ENCODE measurements at regions of chr10 and their contacts with region 1.

Region 1: GRCh38 chr10:103069453-103070331 is 123.4 kb downstream of the NT5C2 start:
- DNase-seq: peak; percentile 33 to 83
- H3K4me3 ChIP-seq: no peak overlapping the region
- H3K27ac ChIP-seq: no peak overlapping the region
- H3K4me1 ChIP-seq: no peaks in the 10 kb centered on the region
- H3K27me3 ChIP-seq: no peaks in the 10 kb centered on the region
- CTCF ChIP-seq: peak; percentile 69 to 85 (median 73)
- EP300 ChIP-seq: no peak
- POLR2A ChIP-seq: no peak
- RAD21 ChIP-seq: peak; percentile 95 to 96

Region 2: DNA sequence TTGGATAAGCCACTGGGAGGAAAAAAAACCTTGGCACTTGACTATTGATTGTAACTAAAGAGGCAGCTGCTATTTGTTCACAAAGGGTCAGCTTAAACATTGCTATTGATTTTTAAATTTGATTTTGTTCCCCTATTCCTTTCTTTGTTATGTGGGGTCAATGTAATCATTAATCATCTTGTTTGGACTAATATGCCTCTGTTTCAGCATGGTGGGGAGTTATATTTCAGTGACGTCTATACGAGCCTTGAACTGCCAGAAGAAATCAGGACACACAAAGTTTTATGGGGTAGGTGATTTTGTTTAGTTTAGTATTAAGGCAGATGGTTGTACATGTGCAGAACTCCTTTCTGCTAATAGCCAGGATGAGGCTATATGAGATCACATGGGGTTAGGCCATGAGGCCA is 192.9 kb before region 1 on chr10:
- CTCF ChIA-PET with region 1: interaction called, 10 read pairs
- POLR2A ChIA-PET with region 1: no interaction called
- DNase-seq: no peak
- H3K4me3 ChIP-seq: no peak overlapping the region
- H3K27ac ChIP-seq: no peak overlapping the region
- H3K4me1 ChIP-seq: no peaks in the 10 kb centered on the region
- H3K27me3 ChIP-seq: no peaks in the 10 kb centered on the region
- CTCF ChIP-seq: no peak
- EP300 ChIP-seq: no peak
- POLR2A ChIP-seq: no peak
- RAD21 ChIP-seq: no peak

Region 3: DNA sequence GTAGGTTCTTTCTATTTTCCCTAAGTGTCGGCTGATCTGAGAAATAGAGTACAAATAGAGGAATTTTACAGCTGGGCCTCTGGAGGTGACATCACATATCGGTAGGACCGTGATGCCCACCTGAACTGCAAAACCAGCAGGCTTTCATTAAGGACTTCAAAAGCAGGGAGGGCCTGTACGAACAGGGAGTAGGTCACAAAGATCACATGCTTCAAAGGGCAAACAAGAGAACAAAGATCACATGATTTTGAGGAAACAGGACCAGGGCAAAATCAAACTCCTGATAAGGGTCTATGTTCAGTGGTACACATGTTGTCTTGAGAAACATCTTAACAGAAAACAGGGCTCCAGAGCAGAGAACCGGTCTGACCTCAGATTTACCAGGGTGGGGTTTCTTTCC is 62.7 kb before region 1 on chr10:
- CTCF ChIA-PET with region 1: no interaction called
- POLR2A ChIA-PET with region 1: no interaction called
- DNase-seq: no peak
- H3K4me3 ChIP-seq: no peak overlapping the region
- H3K27ac ChIP-seq: no peak overlapping the region
- H3K4me1 ChIP-seq: no peaks in the 10 kb centered on the region
- H3K27me3 ChIP-seq: no peaks in the 10 kb centered on the region
- CTCF ChIP-seq: no peak
- EP300 ChIP-seq: no peak
- POLR2A ChIP-seq: no peak
- RAD21 ChIP-seq: no peak

Measured in H1 (cell line).